CD4-positive, alpha-beta memory T cell (primary cell): ENCODE measurements at regions of chr22 and their contacts with region 1.

Region 1: GRCh38 chr22:31345331-31346254 is 553 bp downstream of the PATZ1 start:
- DNase-seq: peak; percentile 91 to 94 (median 92)
- H3K4me3 ChIP-seq: peak overlapping the region; percentile 17 to 73
- H3K4me3 Mint-ChIP-seq: peak overlapping the region; percentile 85 to 98 (median 89)
- H3K27ac ChIP-seq: peak overlapping the region; percentile 56
- H3K27ac Mint-ChIP-seq: peak overlapping the region; percentile 78 to 96 (median 92)
- H3K4me1 ChIP-seq: peaks cover 52% of the 10 kb centered on the region
- H3K4me1 Mint-ChIP-seq: peaks cover 35 to 60% (median 43%) of the 10 kb centered on the region in 4 donors
- H3K27me3 ChIP-seq: no peaks in the 10 kb centered on the region
- H3K27me3 Mint-ChIP-seq: no peaks in the 10 kb centered on the region

Region 2: DNA sequence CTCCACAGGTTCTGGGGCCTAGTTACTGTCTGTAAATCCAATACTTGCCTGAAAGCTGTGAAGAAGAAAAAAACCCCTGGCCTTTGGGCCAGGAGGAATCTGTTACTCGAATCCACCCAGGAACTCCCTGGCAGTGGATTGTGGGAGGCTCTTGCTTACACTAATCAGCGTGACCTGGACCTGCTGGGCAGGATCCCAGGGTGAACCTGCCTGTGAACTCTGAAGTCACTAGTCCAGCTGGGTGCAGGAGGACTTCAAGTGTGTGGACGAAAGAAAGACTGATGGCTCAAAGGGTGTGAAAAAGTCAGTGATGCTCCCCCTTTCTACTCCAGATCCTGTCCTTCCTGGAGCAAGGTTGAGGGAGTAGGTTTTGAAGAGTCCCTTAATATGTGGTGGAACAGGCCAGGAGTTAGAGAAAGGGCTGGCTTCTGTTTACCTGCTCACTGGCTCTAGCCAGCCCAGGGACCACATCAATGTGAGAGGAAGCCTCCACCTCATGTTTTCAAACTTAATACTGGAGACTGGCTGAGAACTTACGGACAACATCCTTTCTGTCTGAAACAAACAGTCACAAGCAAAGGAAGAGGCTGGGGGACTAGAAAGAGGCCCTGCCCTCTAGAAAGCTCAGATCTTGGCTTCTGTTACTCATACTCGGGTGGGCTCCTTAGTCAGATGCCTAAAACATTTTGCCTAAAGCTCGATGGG is 66.8 kb before region 1 on chr22:
- CTCF ChIA-PET with region 1: interaction called, 3 read pairs
- POLR2A ChIA-PET with region 1: interaction called, 11 read pairs
- intact Hi-C with region 1: no loop called
- DNase-seq: peak; percentile 64 to 76 (median 73)
- H3K4me3 ChIP-seq: peak overlapping the region in 1 of 2 donors; percentile 17
- H3K4me3 Mint-ChIP-seq: peak overlapping the region; percentile 38 to 84 (median 77)
- H3K27ac ChIP-seq: peak overlapping the region; percentile 43
- H3K27ac Mint-ChIP-seq: peak overlapping the region; percentile 94 to 99 (median 97)
- H3K4me1 ChIP-seq: peaks cover 87% of the 10 kb centered on the region
- H3K4me1 Mint-ChIP-seq: peaks cover 57 to 92% (median 73%) of the 10 kb centered on the region in 4 donors
- H3K27me3 ChIP-seq: no peaks in the 10 kb centered on the region
- H3K27me3 Mint-ChIP-seq: no peaks in the 10 kb centered on the region

Region 3: DNA sequence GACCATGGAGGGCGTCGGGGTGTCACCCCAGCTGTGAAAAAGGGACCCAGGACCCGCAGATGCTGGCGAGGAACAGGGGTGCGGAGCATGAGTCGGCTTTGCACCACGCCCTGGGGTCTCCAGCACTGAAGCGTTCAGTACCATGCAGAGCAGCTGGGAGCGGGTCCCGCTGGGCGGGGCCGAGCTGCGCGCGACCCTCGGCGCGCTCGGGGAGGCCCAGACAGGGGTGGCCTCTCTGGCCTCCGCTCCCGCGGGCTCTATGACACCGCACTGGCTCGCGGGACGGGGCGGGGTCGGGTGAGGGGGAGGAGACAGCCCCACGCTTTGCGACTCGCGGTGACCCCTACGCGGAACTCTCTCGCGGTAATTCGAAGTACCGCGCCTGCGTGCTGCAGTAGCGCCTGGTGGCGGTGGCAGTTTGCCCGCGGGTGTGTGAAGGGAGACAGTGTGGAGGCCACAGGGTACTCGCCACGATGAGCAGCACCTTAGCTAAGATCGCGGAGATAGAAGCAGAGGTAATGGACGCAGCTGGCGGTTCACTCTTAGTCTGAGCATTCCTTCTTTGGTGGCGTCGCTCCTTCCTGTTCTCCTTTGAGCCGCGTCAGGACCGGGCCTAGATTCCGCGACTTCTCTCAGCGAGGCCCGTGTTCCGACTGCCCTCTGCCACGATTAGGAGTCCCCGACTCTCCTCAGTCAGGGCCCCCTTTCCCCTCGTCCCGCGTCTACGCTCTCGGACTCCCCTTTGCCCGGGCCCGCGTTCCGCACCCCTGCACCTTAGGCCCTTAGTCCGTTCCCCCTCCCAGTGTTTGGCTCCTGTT is 53.8 kb after region 1 on chr22 and contains the start of gene DRG1:
- CTCF ChIA-PET with region 1: interaction called, 6 read pairs
- POLR2A ChIA-PET with region 1: interaction called, 86 read pairs
- intact Hi-C with region 1: loop called (anchors 1 kb)
- DNase-seq: peak; percentile 93 to 95 (median 94)
- H3K4me3 ChIP-seq: peak within 1 kb of the TSS; percentile 87 to 97
- H3K4me3 Mint-ChIP-seq: peak within 1 kb of the TSS; percentile 95 to 97 (median 96)
- H3K27ac ChIP-seq: peak within 1 kb of the TSS; percentile 92
- H3K27ac Mint-ChIP-seq: peak within 1 kb of the TSS; percentile 90 to 98 (median 96)
- H3K4me1 ChIP-seq: peaks cover 26% of the 10 kb centered on the region
- H3K4me1 Mint-ChIP-seq: peaks cover 16 to 24% (median 20%) of the 10 kb centered on the region in 4 donors
- H3K27me3 ChIP-seq: no peaks in the 10 kb centered on the region
- H3K27me3 Mint-ChIP-seq: peaks cover under 1% of the 10 kb centered on the region in 2 donors
- total RNA-seq, gene DRG1: 80.3 to 82.5 TPM

Region 4: GRCh38 chr22:31496007-31496734 is 150.6 kb after region 1 on chr22 and contains the start of gene SFI1:
- CTCF ChIA-PET with region 1: no interaction called
- POLR2A ChIA-PET with region 1: interaction called, 5 read pairs
- intact Hi-C with region 1: loop called (anchors 1 kb)
- DNase-seq: peak; percentile 96 to 97 (median 96)
- H3K4me3 ChIP-seq: peak within 1 kb of the TSS; percentile 93 to 96
- H3K4me3 Mint-ChIP-seq: peak within 1 kb of the TSS; percentile 87 to 98 (median 91)
- H3K27ac ChIP-seq: peak within 1 kb of the TSS; percentile 89
- H3K27ac Mint-ChIP-seq: peak within 1 kb of the TSS; percentile 94 to 98 (median 97)
- H3K4me1 ChIP-seq: peaks cover 60% of the 10 kb centered on the region
- H3K4me1 Mint-ChIP-seq: peaks cover 23 to 63% (median 32%) of the 10 kb centered on the region in 4 donors
- H3K27me3 ChIP-seq: no peaks in the 10 kb centered on the region
- H3K27me3 Mint-ChIP-seq: no peaks in the 10 kb centered on the region
- total RNA-seq, gene SFI1: 323 to 333 TPM

Region 5: GRCh38 chr22:31749636-31750364 is 404.2 kb after region 1 on chr22 and contains the start of gene PRR14L:
- CTCF ChIA-PET with region 1: no interaction called
- POLR2A ChIA-PET with region 1: no interaction called
- intact Hi-C with region 1: loop called (anchors 5 kb)
- DNase-seq: peak; percentile 96 to 99 (median 96)
- H3K4me3 ChIP-seq: peak within 1 kb of the TSS; percentile 24 to 87
- H3K4me3 Mint-ChIP-seq: peak within 1 kb of the TSS; percentile 92 to 100 (median 96)
- H3K27ac ChIP-seq: peak within 1 kb of the TSS; percentile 85
- H3K27ac Mint-ChIP-seq: peak within 1 kb of the TSS; percentile 93 to 97 (median 96)
- H3K4me1 ChIP-seq: peaks cover 48% of the 10 kb centered on the region
- H3K4me1 Mint-ChIP-seq: peaks cover 33 to 70% (median 50%) of the 10 kb centered on the region in 4 donors
- H3K27me3 ChIP-seq: no peaks in the 10 kb centered on the region
- H3K27me3 Mint-ChIP-seq: no peaks in the 10 kb centered on the region
- total RNA-seq, gene PRR14L: 70.7 to 72.6 TPM